ENCODE measurements at regions of chr20 and their contacts with region 1.

Region 1: GRCh38 chr20:8399947-8400346 is 267.9 kb downstream of the PLCB1 start:
- DNase-seq: no peak
- H3K4me3 Mint-ChIP-seq: no peak overlapping the region
- H3K27ac Mint-ChIP-seq: no peak overlapping the region
- H3K4me1 Mint-ChIP-seq: peaks cover 13% of the 10 kb centered on the region
- H3K27me3 Mint-ChIP-seq: peaks cover 18% of the 10 kb centered on the region

Region 2: GRCh38 chr20:8361006-8361652 is 38.8 kb before region 1 on chr20:
- intact Hi-C with region 1: no loop called
- DNase-seq: no peak
- H3K4me3 Mint-ChIP-seq: no peak overlapping the region
- H3K27ac Mint-ChIP-seq: no peak overlapping the region
- H3K4me1 Mint-ChIP-seq: peaks cover 7% of the 10 kb centered on the region
- H3K27me3 Mint-ChIP-seq: peaks cover 39% of the 10 kb centered on the region

Region 3: DNA sequence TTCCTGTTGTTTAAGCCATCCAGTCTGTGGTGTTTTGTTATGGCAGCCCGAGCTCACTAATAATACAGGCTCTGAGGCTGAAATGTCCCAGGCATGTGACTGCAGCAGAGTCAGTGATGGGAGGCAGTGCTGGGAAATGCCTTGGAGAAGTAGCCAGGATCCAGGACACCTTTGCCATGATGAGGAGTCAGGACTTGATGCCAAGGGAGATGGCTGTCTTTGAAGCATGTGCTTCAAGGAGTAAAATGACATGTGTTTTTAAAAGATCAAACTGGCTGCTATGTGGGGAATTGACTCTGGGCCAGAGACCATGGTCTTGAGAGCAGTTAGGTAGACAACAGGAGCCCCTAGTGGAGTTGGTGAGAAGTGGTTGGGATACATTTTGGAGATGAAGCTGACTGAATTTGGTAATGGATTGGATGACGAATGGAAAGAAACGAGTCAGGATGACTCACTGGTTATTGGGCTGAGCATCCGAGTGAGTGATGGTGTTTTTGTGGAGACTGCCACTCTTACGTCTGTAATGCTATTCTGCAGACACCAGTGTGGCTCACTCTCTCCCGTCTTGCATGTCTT is 54.3 kb after region 1 on chr20:
- intact Hi-C with region 1: loop called (anchors 1 kb)
- DNase-seq: no peak
- H3K4me3 Mint-ChIP-seq: no peak overlapping the region
- H3K27ac Mint-ChIP-seq: peak overlapping the region; percentile 6
- H3K4me1 Mint-ChIP-seq: peaks cover 8% of the 10 kb centered on the region
- H3K27me3 Mint-ChIP-seq: no peaks in the 10 kb centered on the region

Region 4: DNA sequence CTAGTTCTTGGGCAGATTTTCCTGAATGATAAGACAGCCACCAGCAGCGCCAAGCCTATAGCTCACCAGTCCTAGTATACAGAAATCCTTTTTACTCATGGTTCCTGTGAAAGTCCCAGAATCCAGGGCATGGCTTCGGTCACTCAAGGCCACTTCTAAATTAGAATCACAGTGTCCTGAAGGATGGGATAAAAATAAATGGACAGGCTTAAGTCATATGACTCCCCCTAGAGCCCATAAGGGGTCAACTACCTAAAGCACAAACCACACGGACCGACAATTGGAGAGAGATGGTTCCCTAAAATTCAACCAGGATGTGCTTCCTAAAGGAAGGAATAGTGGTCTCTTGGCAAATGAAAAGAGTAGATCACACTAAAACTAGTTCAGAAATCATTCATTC is 264.8 kb after region 1 on chr20:
- intact Hi-C with region 1: loop called (anchors 5 kb)
- DNase-seq: no peak
- H3K4me3 Mint-ChIP-seq: no peak overlapping the region
- H3K27ac Mint-ChIP-seq: no peak overlapping the region
- H3K4me1 Mint-ChIP-seq: no peaks in the 10 kb centered on the region
- H3K27me3 Mint-ChIP-seq: no peaks in the 10 kb centered on the region

Measured in activated T-helper 2 cell treated with anti-CD3 and anti-CD28 coated beads, Interferon-gamma antibody, Interleukin-2, Interleukin-4, amounts not matched to agents 10 μg/mL and 5 μg/mL and 100 μg/mL, durations not matched to agents 14 hours and 24 hours and 36 hours (primary cell).